Sigmoid colon (tissue), 7 donors: ENCODE measurements at regions of chr13 and their contacts with region 1.

Region 1: DNA sequence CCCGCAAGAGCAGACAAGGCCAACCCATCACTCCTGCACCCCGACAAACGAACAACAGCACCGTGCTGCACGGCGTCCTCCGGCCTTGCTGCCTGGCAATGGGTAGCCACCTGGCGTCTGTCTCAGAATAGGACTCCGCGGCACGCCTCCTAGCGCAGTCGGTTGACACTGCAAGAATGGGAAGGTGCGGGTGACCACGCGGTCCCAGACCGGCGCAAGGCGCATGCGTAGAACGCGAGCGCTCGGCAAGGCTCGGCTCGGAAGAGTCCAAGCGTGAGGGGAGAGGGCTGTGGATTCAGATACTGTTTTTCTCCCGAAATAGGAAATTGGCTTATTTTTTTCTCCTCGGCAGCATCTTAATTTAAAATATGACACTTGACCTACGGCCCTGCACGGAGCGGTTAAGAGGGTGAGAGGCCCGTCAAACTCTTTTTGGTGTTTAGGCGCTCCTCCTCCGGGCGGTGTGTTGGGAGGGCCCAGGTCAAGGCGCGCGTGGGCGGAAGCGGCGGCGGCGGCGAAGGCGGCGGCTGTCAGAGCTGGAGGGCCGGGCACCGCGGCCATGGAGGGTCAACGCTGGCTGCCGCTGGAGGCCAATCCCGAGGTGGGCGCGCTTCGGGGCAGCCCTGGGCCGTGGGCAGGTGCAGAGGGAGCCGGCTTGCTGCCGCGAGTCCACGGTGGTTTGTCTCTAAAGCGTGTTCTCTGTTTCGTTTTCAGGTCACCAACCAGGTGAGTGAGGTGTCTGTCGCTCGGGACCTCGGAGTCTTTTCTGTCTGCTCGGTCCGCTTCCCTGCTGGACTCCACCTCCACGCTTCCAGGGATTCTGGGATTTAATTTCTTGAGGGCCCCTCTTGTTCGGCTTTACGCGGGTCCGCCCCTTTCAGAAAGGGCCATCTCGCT is at the start of gene UCHL3:
- DNase-seq: peak; percentile 97
- H3K4me3 ChIP-seq: peak within 1 kb of the TSS; percentile 77 to 95 (median 85)
- H3K27ac ChIP-seq: peak within 1 kb of the TSS; percentile 72 to 79 (median 76)
- H3K4me1 ChIP-seq: peaks cover 0 to 20% (median 16%) of the 10 kb centered on the region in 4 donors
- H3K27me3 ChIP-seq: no peaks in the 10 kb centered on the region
- CTCF ChIP-seq: peak; percentile 82 to 93 (median 87)
- EP300 ChIP-seq: no peak
- POLR2A ChIP-seq: peak in 1 of 2 donors; percentile 13
- total RNA-seq, gene UCHL3: 25.0 to 41.5 (median 32.3) TPM

Region 2: GRCh38 chr13:75372517-75372916 is 177.0 kb before region 1 on chr13:
- intact Hi-C with region 1: loop called (anchors 2 kb)
- DNase-seq: no peak
- H3K4me3 ChIP-seq: no peak overlapping the region
- H3K27ac ChIP-seq: peak overlapping the region in 1 of 4 donors; percentile 46
- H3K4me1 ChIP-seq: peaks cover 0 to 19% (median 13%) of the 10 kb centered on the region in 4 donors
- H3K27me3 ChIP-seq: no peaks in the 10 kb centered on the region
- CTCF ChIP-seq: peak in 3 of 4 experiments; percentile 35 to 73 (median 61)
- EP300 ChIP-seq: no peak
- POLR2A ChIP-seq: no peak

Region 3: DNA sequence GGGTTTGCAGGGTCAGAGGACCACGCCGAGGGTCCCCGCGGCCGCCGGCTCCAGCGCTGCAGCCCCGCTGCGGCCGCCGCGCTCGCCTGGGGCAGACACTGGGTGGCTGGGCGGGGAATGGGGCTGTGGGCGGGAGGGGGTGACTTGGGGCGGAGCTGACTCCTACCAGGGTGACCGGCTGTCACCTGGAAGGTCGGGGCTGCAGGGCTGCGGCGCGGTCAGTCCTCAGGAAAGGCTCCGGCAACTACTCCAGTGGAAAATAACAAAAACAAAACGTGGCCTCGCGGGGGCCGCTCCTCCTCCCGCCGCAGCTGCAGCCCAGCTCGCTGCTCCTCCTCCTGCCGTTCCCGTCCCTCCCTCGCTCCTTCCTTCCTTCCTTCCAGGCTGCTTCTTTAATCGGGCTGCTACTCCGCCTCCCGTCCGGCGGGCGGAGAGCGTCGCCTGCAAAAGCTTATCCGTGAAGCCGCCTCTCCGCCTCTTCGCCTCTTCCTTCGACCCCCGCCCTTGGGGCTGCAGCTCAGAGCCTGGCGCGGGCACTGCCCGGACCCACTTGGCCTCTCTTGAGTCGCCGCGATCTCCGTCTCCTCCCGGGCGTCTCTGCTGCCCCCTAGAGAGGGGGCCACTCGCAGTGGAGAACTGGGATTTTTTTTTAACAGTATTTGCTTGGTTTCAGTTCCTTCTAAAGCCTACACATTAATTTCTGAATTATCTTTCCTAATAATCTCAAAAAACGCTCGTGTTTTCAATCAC is 67.3 kb before region 1 on chr13 and contains the start of gene TBC1D4:
- intact Hi-C with region 1: loop called (anchors 1 kb)
- DNase-seq: peak; percentile 89
- H3K4me3 ChIP-seq: peak within 1 kb of the TSS; percentile 64 to 94 (median 84)
- H3K27ac ChIP-seq: peak within 1 kb of the TSS; percentile 76 to 84 (median 81)
- H3K4me1 ChIP-seq: peaks cover 0 to 16% (median 13%) of the 10 kb centered on the region in 4 donors
- H3K27me3 ChIP-seq: no peaks in the 10 kb centered on the region
- CTCF ChIP-seq: peak; percentile 53 to 71 (median 66)
- EP300 ChIP-seq: no peak
- POLR2A ChIP-seq: no peak
- total RNA-seq, gene TBC1D4: 7.2 to 15.0 (median 10.1) TPM

Region 4: GRCh38 chr13:75537401-75538365 is 11.8 kb before region 1 on chr13 and contains the start of gene COMMD6:
- intact Hi-C with region 1: loop called (anchors 1 kb)
- DNase-seq: peak; percentile 93
- H3K4me3 ChIP-seq: peak within 1 kb of the TSS; percentile 65 to 88 (median 85)
- H3K27ac ChIP-seq: peak within 1 kb of the TSS; percentile 76 to 85 (median 84)
- H3K4me1 ChIP-seq: peaks cover 0 to 26% (median 16%) of the 10 kb centered on the region in 4 donors
- H3K27me3 ChIP-seq: no peaks in the 10 kb centered on the region
- CTCF ChIP-seq: peak; percentile 58 to 91 (median 70)
- EP300 ChIP-seq: no peak
- POLR2A ChIP-seq: peak; percentile 27 to 64
- total RNA-seq, gene COMMD6: 174 to 447 (median 191) TPM